ENCODE measurements at regions of chr11 and their contacts with region 1.

Region 1: GRCh38 chr11:64854534-64855429 is 10.3 kb upstream of the CDC42BPG start:
- DNase-seq: peak; percentile 60
- H3K4me3 ChIP-seq: no peak overlapping the region
- H3K27ac ChIP-seq: peak overlapping the region; percentile 73
- H3K27me3 ChIP-seq: no peaks in the 10 kb centered on the region
- CTCF ChIP-seq: no peak

Region 2: GRCh38 chr11:64878494-64879243 is 23.9 kb after region 1 on chr11 and contains the start of gene EHD1:
- CTCF ChIA-PET with region 1: interaction called, 12 read pairs
- POLR2A ChIA-PET with region 1: interaction called, 18 read pairs
- DNase-seq: peak; percentile 94
- H3K4me3 ChIP-seq: peak within 1 kb of the TSS; percentile 99
- H3K27ac ChIP-seq: peak within 1 kb of the TSS; percentile 65
- H3K27me3 ChIP-seq: no peaks in the 10 kb centered on the region
- CTCF ChIP-seq: peak; percentile 64
- polyA plus RNA-seq, gene EHD1: 56.1 and 77.7 TPM in 2 replicates

Measured in AG04450 (cell line).